ENCODE measurements at regions of chr3 and their contacts with region 1.

Region 1: GRCh38 chr3:149686991-149687390 is 29.2 kb upstream of the WWTR1 start:
- DNase-seq: no peak

Region 2: DNA sequence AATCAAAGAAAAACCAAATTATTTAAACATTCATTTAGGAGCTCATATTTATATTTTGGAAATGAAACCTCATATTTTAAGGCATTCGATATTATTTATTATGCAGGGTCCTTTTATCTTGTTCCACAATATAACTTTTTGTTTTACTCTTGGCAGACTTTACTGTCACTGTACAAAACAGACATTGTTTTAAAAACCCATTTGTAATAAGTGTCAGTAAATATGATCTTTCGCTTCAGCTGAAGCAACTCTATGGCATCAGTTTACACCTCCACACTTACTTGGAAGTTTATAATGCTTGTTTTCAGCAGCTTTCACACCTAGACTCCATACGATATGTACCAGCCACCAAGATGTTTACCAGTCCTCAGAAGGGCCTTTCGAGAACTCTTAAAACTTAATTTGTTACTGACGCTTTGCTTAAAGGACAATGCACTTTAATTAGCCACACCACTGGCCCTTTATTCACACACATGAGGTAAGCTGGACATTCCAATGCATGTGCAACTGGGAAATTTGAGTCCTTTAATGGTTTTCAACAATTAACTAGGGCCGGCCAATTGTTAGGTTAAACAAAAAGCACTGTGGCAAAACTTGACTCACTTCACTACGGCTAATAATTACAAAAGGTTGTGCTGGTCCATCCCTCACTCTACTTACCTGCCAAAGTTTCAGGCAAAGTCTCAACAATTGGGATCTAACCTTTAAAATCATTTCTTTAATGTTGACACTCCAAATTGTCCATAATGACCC is 45.8 kb before region 1 on chr3:
- intact Hi-C with region 1: loop called in 1 of 2 experiments (anchors 1 kb)
- DNase-seq: no peak